Right cardiac atrium (tissue), 5 donors: ENCODE measurements at regions of chr11 and their contacts with region 1.

Region 1: DNA sequence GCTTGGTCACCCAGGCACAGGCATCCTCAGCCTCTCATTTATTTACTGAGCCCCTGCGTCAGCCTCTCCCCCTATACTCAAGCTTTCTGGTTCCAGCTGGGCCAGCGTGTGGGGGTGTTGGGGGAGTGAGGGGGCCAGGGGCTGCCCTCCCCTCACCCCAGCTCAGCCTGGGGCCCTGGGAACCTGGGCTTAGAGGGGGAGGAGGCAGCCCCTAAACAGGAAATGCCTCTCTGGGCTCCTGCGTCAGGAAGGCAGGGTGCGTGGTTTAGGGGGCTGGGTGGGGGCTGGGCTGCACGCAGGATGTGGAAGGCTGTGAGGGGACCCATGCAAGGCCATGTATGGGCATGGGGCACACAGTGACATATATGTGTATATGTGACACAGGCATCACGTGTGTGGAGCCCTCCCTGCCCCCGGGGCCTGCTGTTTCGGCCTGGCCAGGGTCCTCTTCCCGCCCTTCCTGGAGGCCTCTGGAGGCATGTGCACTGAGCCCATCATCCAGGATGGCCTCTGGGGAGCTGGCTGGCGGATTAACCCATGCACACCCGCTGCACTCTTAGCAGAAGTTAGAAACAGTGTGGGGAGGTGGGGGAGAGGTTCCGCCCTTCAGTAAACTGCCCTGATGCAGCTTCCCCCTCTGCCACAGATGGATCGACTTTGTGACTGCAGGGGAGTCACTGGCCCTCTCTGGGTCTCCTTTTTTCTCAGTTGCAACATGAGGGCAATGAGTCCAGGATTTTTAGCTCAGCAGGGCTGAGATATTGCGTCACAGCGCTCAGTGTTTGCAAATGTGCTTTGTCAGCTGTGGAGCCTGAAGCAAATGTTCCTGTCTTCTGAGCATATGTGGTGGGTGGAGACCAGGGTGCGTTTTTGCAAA is 1.1 kb upstream of the CD248 start:
- DNase-seq: peak; percentile 74 to 86 (median 83)
- ATAC-seq: peak; percentile 4 to 15
- H3K4me3 ChIP-seq: no peak overlapping the region
- H3K27ac ChIP-seq: peak overlapping the region; percentile 82
- H3K4me1 ChIP-seq: peaks cover 5% of the 10 kb centered on the region
- H3K27me3 ChIP-seq: no peaks in the 10 kb centered on the region

Region 2: DNA sequence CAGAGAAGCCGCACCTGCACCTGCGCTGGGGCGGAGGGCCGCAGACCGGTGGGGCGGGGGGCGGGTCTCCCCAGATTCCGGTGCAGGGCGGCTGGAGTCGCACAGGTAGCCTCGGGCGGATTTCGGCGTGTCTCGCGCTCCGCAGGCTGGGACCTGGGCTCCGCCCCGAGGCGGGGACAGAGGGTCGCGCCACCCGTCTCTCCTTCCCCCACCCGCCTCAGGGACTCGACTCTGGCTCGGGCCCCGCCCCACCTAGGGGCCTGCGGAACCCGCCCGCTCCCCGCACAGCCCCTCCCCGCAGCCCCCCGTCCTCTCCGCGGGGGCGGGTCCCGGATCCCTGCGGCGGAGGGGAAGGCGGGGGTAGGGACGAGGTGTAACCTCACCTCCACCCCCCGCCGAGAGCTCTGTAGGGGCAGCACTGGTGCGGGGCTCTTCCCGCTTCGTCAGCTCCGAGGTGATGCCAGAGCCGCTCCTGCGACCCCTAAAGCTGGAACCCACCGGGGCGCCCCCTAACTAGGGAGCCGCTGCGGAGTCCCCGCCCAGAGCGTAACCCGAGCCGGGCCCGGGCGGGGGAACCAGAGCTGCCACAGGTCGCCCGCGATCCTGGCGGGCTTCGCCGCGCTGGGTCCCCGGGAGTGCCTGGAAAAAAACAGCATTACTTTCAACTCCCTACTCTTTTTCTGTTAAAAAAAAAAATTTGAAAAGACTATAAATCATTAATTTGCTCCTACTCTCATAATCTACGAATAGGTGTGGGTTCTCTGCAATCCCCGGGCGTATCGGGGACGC is 53.9 kb after region 1 on chr11 and contains the start of gene SLC29A2:
- intact Hi-C with region 1: loop called in 1 of 4 experiments (anchors 2 kb)
- DNase-seq: peak; percentile 65 to 90 (median 87)
- ATAC-seq: peak; percentile 83 to 85
- H3K4me3 ChIP-seq: peak within 1 kb of the TSS; percentile 59
- H3K27ac ChIP-seq: peak within 1 kb of the TSS; percentile 87
- H3K4me1 ChIP-seq: peaks cover 6% of the 10 kb centered on the region
- H3K27me3 ChIP-seq: no peaks in the 10 kb centered on the region
- total RNA-seq, gene SLC29A2: 18.7 to 33.2 (median 30.0) TPM